GM12878 (cell line): ENCODE measurements at regions of chr4 and their contacts with region 1.

Region 1: GRCh38 chr4:150018257-150018656 is 60.0 kb upstream of the DCLK2 start:
- DNase-seq: no peak
- ATAC-seq: no peak
- H3K4me3 ChIP-seq: no peak overlapping the region
- H3K27ac ChIP-seq: no peak overlapping the region
- H3K4me1 ChIP-seq: no peaks in the 10 kb centered on the region
- H3K27me3 ChIP-seq: peaks cover 0 to under 1% of the 10 kb centered on the region in 2 experiments; a peak in 1 of 4 replicates
- CTCF ChIP-seq: no peak
- EP300 ChIP-seq: no peak
- POLR2A ChIP-seq: no peak
- RAD21 ChIP-seq: no peak

Region 2: GRCh38 chr4:149980941-149981340 is 37.3 kb before region 1 on chr4:
- CTCF ChIA-PET with region 1: no interaction called
- POLR2A ChIA-PET with region 1: no interaction called
- RAD21 ChIA-PET with region 1: no interaction called
- SMC1A ChIA-PET with region 1: no interaction called
- in situ Hi-C with region 1: no loop called
- intact Hi-C with region 1: no loop called
- DNase-seq: no peak
- ATAC-seq: peak; percentile 83
- H3K4me3 ChIP-seq: no peak overlapping the region
- H3K27ac ChIP-seq: no peak overlapping the region
- H3K4me1 ChIP-seq: no peaks in the 10 kb centered on the region
- H3K27me3 ChIP-seq: no peaks in the 10 kb centered on the region; a peak in 1 of 4 replicates
- CTCF ChIP-seq: peak; percentile 73 to 78 (median 75)
- EP300 ChIP-seq: no peak
- POLR2A ChIP-seq: no peak
- RAD21 ChIP-seq: peak; percentile 70

Region 3: GRCh38 chr4:150217192-150217591 is 198.9 kb after region 1 on chr4:
- CTCF ChIA-PET with region 1: no interaction called
- POLR2A ChIA-PET with region 1: no interaction called
- RAD21 ChIA-PET with region 1: no interaction called
- SMC1A ChIA-PET with region 1: no interaction called
- in situ Hi-C with region 1: loop called (anchors 5 kb)
- intact Hi-C with region 1: no loop called
- DNase-seq: no peak
- ATAC-seq: no peak
- H3K4me3 ChIP-seq: no peak overlapping the region
- H3K27ac ChIP-seq: no peak overlapping the region
- H3K4me1 ChIP-seq: no peaks in the 10 kb centered on the region
- H3K27me3 ChIP-seq: no peaks in the 10 kb centered on the region; a peak in 1 of 4 replicates
- CTCF ChIP-seq: peak in 2 of 3 experiments; percentile 25 to 27; a peak in 3 of 6 replicates
- EP300 ChIP-seq: no peak
- POLR2A ChIP-seq: no peak
- RAD21 ChIP-seq: peak; percentile 57